Activated CD4-positive, alpha-beta memory T cell treated with anti-CD3 and anti-CD28 coated beads for 36 hours (primary cell): ENCODE measurements at regions of chr19 and their contacts with region 1.

Region 1: GRCh38 chr19:46704379-46705076 is 12.4 kb downstream of the PRKD2 start:
- DNase-seq: peak; percentile 91
- H3K4me3 Mint-ChIP-seq: no peak overlapping the region
- H3K27ac Mint-ChIP-seq: peak overlapping the region; percentile 60
- H3K4me1 Mint-ChIP-seq: peaks cover 7% of the 10 kb centered on the region
- H3K27me3 Mint-ChIP-seq: no peaks in the 10 kb centered on the region

Region 2: DNA sequence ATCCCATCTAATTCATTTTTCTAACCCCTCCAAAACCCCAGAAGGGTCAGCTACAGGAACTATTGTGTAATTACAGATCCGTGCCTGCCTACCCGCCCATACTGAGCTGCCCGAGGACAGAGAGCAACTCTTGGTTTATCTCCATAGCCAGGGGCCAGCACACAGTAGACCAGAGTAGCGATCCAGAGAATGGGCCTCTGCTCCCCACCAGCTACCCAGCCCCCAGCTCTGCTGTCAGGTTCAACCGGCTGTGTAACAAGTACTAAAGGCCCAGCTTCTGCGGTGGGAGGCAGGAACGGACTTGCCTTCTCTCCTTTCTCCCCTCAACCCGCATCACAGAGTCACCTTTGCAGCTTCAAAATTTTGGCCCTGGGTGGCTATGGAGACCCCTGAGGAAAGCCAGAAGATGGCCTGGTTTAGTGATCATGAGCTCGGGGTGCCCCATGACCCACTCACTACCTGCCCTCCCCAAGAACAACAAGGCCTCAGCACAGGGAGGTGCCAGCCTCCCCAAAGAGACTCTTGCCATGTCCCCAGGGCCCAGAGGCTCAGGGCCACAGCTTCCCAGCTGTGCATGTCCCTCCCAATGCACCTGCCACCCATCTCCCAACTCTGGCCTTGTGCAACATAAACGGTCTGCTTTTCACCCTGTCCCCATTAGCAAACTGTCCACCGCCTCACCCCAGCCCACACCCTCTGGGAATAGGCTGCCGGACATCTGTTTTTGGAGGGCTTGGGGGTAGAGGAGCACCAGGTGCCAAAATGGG is 97.7 kb before region 1 on chr19:
- CTCF ChIA-PET with region 1: no interaction called
- POLR2A ChIA-PET with region 1: no interaction called
- intact Hi-C with region 1: no loop called
- DNase-seq: no peak
- H3K4me3 Mint-ChIP-seq: no peak overlapping the region
- H3K27ac Mint-ChIP-seq: no peak overlapping the region
- H3K4me1 Mint-ChIP-seq: peaks cover 51% of the 10 kb centered on the region
- H3K27me3 Mint-ChIP-seq: no peaks in the 10 kb centered on the region

Region 3: DNA sequence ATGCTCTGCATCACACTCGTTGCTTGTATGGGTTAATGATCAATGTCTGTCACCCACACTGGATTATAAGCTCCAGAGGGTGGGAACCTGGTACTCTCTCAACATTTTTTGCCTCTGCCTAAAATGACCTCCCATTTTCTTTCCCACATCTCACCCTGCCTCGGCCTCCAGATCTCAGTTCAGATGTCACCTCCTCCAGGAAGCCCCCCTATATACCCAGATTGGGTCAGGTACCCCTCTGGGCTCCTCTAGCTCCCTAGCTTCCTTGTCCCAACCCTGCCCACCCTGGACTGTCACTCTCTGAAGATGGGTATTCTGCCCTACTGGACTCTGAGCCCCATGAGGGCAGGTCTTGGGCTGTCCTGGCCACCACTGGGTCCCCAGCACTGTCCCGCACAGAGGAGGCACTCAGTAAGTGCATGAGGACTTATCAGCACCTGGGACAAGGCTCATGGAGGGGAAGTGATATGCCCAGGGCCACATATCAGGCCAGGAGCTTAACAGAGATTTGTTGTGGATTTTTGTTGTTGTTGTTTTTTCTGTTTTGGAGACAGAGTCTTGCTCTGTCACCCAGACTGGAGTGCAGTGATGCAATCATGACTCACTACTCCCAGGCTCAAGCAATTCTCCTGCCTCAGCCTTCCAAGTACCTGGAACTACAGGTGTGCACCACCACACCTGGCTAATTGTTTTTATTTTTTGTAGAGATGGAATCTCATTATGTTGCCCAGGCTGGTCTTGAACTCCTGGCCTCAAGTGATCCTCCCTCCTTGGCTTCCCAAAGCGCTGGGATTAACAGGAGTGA is 11.4 kb before region 1 on chr19:
- CTCF ChIA-PET with region 1: interaction called, 14 read pairs
- POLR2A ChIA-PET with region 1: no interaction called
- intact Hi-C with region 1: no loop called
- DNase-seq: no peak
- H3K4me3 Mint-ChIP-seq: no peak overlapping the region
- H3K27ac Mint-ChIP-seq: no peak overlapping the region
- H3K4me1 Mint-ChIP-seq: no peaks in the 10 kb centered on the region
- H3K27me3 Mint-ChIP-seq: no peaks in the 10 kb centered on the region

Region 4: GRCh38 chr19:46717034-46717723 is 12.7 kb after region 1 on chr19 and contains the start of gene PRKD2:
- CTCF ChIA-PET with region 1: interaction called, 68 read pairs
- POLR2A ChIA-PET with region 1: interaction called, 7 read pairs
- intact Hi-C with region 1: no loop called
- DNase-seq: peak; percentile 94
- H3K4me3 Mint-ChIP-seq: peak within 1 kb of the TSS; percentile 93
- H3K27ac Mint-ChIP-seq: peak within 1 kb of the TSS; percentile 95
- H3K4me1 Mint-ChIP-seq: peaks cover 38% of the 10 kb centered on the region
- H3K27me3 Mint-ChIP-seq: no peaks in the 10 kb centered on the region
- total RNA-seq, gene PRKD2: 78.8 to 84.4 TPM

Region 5: GRCh38 chr19:46746281-46747013 is 41.9 kb after region 1 on chr19 and contains the start of gene STRN4:
- CTCF ChIA-PET with region 1: interaction called, 3 read pairs
- POLR2A ChIA-PET with region 1: no interaction called
- intact Hi-C with region 1: loop called (anchors 5 kb)
- DNase-seq: peak; percentile 66
- H3K4me3 Mint-ChIP-seq: peak within 1 kb of the TSS; percentile 94
- H3K27ac Mint-ChIP-seq: peak within 1 kb of the TSS; percentile 83
- H3K4me1 Mint-ChIP-seq: peaks cover 49% of the 10 kb centered on the region
- H3K27me3 Mint-ChIP-seq: no peaks in the 10 kb centered on the region
- total RNA-seq, gene STRN4: 52.6 to 59.3 TPM

Region 6: DNA sequence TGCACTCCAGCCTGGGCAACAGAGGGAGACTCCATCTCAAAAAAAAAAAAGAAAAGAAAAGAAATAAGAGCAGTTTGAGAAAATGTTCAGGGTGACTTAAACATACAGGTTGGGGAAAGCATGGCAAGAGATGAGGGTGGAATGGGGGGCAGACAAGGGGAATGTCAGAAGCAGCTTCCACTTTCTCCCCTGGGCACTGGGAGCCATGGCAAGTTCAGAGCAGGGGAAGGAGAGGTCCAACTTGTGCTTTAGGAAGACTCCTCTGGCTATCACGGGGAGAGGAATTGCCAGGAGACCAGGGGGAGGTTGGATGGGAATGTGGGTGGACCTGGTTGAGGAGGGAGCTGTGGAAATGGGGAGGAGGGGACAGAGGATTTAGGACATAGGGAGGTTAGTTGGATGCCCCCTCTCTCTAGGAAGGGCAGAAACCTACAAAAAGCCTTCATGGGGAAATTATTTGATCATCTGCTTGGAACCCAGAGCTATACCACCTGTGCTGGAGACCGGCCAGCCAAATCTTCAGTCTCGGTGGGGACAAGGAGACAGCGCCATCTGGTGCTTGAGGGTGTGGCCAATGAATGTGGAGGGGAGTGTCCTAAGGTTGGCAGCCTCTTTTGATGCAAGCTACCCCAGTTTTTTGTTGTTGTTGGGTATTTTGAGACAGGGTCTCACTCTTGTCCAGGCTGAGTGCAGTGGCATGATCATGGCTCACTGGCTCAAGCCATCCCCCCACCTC is 49.1 kb after region 1 on chr19:
- CTCF ChIA-PET with region 1: interaction called, 12 read pairs
- POLR2A ChIA-PET with region 1: no interaction called
- intact Hi-C with region 1: loop called (anchors 5 kb)
- DNase-seq: peak; percentile 83
- H3K4me3 Mint-ChIP-seq: no peak overlapping the region
- H3K27ac Mint-ChIP-seq: no peak overlapping the region
- H3K4me1 Mint-ChIP-seq: peaks cover under 1% of the 10 kb centered on the region
- H3K27me3 Mint-ChIP-seq: no peaks in the 10 kb centered on the region

Region 7: GRCh38 chr19:46797881-46798280 is 93.4 kb after region 1 on chr19:
- CTCF ChIA-PET with region 1: no interaction called
- POLR2A ChIA-PET with region 1: no interaction called
- intact Hi-C with region 1: no loop called
- DNase-seq: no peak
- H3K4me3 Mint-ChIP-seq: no peak overlapping the region
- H3K27ac Mint-ChIP-seq: no peak overlapping the region
- H3K4me1 Mint-ChIP-seq: no peaks in the 10 kb centered on the region
- H3K27me3 Mint-ChIP-seq: no peaks in the 10 kb centered on the region